B cell (primary cell): ENCODE measurements at regions of chr16 and their contacts with region 1.

Region 1: GRCh38 chr16:5071681-5072333 is at the start of gene ALG1:
- DNase-seq: peak; percentile 93
- ATAC-seq: peak; percentile 87
- H3K4me3 ChIP-seq: peak within 1 kb of the TSS; percentile 50 to 87 (median 74)
- H3K4me3 Mint-ChIP-seq: peak within 1 kb of the TSS; percentile 98
- H3K27ac ChIP-seq: peak within 1 kb of the TSS; percentile 81 to 90
- H3K27ac Mint-ChIP-seq: peak within 1 kb of the TSS; percentile 99
- H3K4me1 ChIP-seq: peaks cover 14 to 18% of the 10 kb centered on the region in 2 donors
- H3K4me1 Mint-ChIP-seq: peaks cover 27% of the 10 kb centered on the region
- H3K27me3 ChIP-seq: no peaks in the 10 kb centered on the region
- H3K27me3 Mint-ChIP-seq: peaks cover 3% of the 10 kb centered on the region
- CTCF ChIP-seq: no peak
- total RNA-seq, gene ALG1: 24.2 and 26.3 TPM in 2 replicates

Region 2: GRCh38 chr16:4859900-4860255 is 211.9 kb before region 1 on chr16:
- CTCF ChIA-PET with region 1: no interaction called
- POLR2A ChIA-PET with region 1: no interaction called
- intact Hi-C with region 1: no loop called
- DNase-seq: no peak
- ATAC-seq: no peak
- H3K4me3 ChIP-seq: no peak overlapping the region
- H3K4me3 Mint-ChIP-seq: no peak overlapping the region
- H3K27ac ChIP-seq: no peak overlapping the region
- H3K27ac Mint-ChIP-seq: no peak overlapping the region
- H3K4me1 ChIP-seq: no peaks in the 10 kb centered on the region
- H3K4me1 Mint-ChIP-seq: no peaks in the 10 kb centered on the region
- H3K27me3 ChIP-seq: no peaks in the 10 kb centered on the region
- H3K27me3 Mint-ChIP-seq: no peaks in the 10 kb centered on the region
- CTCF ChIP-seq: no peak

Region 3: GRCh38 chr16:5033256-5034169 is 38.3 kb before region 1 on chr16 and contains the start of gene NAGPA:
- CTCF ChIA-PET with region 1: no interaction called
- POLR2A ChIA-PET with region 1: interaction called, 3 read pairs
- intact Hi-C with region 1: loop called (anchors 1 kb)
- DNase-seq: peak; percentile 91
- ATAC-seq: peak; percentile 85
- H3K4me3 ChIP-seq: peak within 1 kb of the TSS; percentile 66 to 82 (median 75)
- H3K4me3 Mint-ChIP-seq: peak within 1 kb of the TSS; percentile 93
- H3K27ac ChIP-seq: peak within 1 kb of the TSS; percentile 73 to 79
- H3K27ac Mint-ChIP-seq: peak within 1 kb of the TSS; percentile 95
- H3K4me1 ChIP-seq: peaks cover 14 to 17% of the 10 kb centered on the region in 2 donors
- H3K4me1 Mint-ChIP-seq: peaks cover 20% of the 10 kb centered on the region
- H3K27me3 ChIP-seq: no peaks in the 10 kb centered on the region
- H3K27me3 Mint-ChIP-seq: no peaks in the 10 kb centered on the region
- CTCF ChIP-seq: no peak
- total RNA-seq, gene NAGPA: 38.4 and 43.3 TPM in 2 replicates